Activated CD4-positive, alpha-beta T cell treated with anti-CD3 and anti-CD28 coated beads, Interleukin-2, amount 10 ng/mL, durations not matched to agents 7 days and 5 days (primary cell): ENCODE measurements at regions of chr20 and their contacts with region 1.

Region 1: DNA sequence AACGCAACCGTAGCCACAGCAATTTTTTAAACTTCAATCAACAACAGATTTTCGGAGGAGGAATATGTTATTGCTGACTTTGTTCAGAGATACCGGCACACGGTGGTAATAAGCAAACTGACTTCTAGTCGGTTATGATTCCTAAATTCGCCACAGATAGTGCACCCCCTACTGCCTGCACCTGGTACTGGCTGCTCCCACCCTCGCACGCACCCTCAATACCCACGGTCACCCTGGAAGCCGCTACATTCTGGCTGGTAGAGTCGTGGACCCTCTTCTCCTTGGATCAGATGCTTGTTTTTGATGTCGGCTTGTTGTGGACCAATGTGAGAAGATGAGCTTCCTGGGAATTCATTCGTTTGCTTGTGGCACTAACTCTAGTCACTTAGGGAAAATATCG is 10.7 kb downstream of the NPEPL1 start:
- DNase-seq: no peak
- H3K4me3 Mint-ChIP-seq: no peak overlapping the region
- H3K27ac Mint-ChIP-seq: no peak overlapping the region
- H3K4me1 Mint-ChIP-seq: peaks cover 3% of the 10 kb centered on the region
- H3K27me3 Mint-ChIP-seq: no peaks in the 10 kb centered on the region

Region 2: DNA sequence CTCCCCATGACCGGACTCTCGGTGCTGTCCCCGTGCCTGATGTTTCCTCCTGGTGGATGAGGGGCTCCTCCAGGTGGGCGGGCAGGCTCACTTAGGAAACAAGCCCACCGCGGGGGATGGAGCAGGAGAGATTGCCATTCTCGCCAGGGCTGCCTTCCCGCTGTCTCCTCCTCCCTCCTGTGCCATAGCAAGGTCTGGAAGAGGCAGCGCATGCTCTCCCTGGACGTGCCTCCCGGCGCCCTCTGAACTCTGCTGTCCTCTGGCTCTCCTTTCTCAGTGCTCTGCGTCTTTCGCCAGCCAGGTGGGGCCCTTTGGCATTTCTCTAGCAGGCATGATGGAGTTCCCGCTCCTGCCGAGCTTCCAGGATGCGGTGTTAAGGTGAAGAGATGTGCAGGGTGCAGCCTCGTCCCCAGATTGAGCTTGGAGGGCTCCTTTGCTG is 28.1 kb before region 1 on chr20:
- CTCF ChIA-PET with region 1: no interaction called
- POLR2A ChIA-PET with region 1: no interaction called
- DNase-seq: no peak
- H3K4me3 Mint-ChIP-seq: no peak overlapping the region
- H3K27ac Mint-ChIP-seq: no peak overlapping the region
- H3K4me1 Mint-ChIP-seq: peaks cover 3% of the 10 kb centered on the region
- H3K27me3 Mint-ChIP-seq: no peaks in the 10 kb centered on the region

Region 3: DNA sequence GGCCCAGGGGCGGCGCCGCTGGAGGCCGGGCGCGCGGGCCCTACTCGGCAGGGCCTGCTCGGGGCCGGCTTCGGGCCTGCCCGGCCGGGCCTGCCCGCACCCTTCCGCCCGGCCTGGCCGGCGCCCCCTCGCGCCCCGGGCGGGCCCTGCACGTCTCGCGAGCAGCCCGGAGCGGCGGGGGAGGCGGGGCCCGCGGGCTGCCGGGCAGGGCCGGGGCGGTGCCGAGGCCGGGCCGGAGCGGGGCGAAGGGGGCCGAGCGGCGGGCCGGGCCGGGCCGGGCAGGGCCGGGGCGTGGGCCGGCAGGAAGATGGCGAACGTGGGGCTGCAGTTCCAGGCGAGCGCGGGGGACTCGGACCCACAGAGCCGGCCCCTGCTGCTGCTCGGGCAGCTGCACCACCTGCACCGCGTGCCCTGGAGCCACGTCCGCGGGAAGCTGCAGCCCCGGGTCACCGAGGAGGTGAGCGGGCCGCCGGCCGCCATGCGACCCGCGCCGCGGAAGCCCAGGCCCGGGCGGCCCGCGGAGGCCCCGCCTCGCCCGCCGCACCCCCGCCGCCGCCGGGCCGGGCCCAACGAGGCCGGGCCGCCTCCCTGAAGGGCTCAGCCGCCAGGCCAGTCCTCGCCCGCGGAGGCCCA is 10.6 kb before region 1 on chr20 and contains the start of gene NPEPL1:
- CTCF ChIA-PET with region 1: interaction called, 10 read pairs
- POLR2A ChIA-PET with region 1: no interaction called
- DNase-seq: peak; percentile 58
- H3K4me3 Mint-ChIP-seq: peak within 1 kb of the TSS; percentile 70
- H3K27ac Mint-ChIP-seq: peak within 1 kb of the TSS; percentile 83
- H3K4me1 Mint-ChIP-seq: peaks cover 13% of the 10 kb centered on the region
- H3K27me3 Mint-ChIP-seq: no peaks in the 10 kb centered on the region
- total RNA-seq, gene NPEPL1: 28.7 to 30.7 TPM